ENCODE measurements at regions of chr5 and their contacts with region 1.

Region 1: DNA sequence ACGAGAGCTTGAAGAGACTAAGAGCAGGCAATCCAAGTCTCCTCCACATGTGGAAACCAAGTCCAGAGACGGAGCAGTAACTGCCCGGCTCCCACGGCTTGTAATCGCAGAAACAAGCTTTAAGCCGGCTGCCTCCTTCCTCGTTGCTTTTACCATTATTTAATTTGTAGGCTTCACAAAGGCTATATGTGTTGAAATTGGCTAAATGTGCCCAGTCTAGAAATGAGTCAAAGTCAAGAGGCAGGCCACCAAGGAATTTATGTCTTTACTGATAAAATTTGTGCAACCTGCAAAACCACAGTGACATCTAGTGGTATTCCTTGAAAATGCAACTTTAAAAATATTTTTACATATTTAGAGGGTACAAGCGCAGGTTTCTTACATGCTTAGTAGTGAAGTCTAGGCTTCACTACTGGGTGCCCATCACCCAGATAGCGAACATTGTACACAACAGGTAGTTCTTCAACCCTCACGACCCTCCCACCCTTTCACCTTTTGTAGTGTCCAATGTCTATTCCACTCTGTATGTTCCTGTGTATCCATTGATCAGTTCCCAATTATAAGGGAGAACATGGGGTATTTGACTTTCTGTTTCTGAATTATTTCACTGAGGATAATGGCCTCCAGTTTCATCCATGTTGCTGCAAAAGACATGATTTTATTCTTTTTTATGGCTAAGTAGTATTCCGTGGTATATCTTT is 33.5 kb upstream of the EBF1 start:
- DNase-seq: peak; percentile 79
- ATAC-seq: peak; percentile 78
- H3K4me3 ChIP-seq: peak overlapping the region; percentile 48
- H3K27ac ChIP-seq: peak overlapping the region; percentile 45
- H3K4me1 ChIP-seq: peaks cover 22% of the 10 kb centered on the region
- H3K27me3 ChIP-seq: peaks cover 2% of the 10 kb centered on the region; the same call in 1 of the 2 replicates
- CTCF ChIP-seq: peak; percentile 77

Region 2: GRCh38 chr5:157142317-157143126 is 1990.7 kb before region 1 on chr5 and contains the start of gene MED7:
- CTCF ChIA-PET with region 1: no interaction called
- POLR2A ChIA-PET with region 1: no interaction called
- intact Hi-C with region 1: loop called (anchors 10 kb)
- DNase-seq: peak; percentile 100
- ATAC-seq: peak; percentile 99
- H3K4me3 ChIP-seq: peak within 1 kb of the TSS; percentile 79
- H3K27ac ChIP-seq: peak within 1 kb of the TSS; percentile 16
- H3K4me1 ChIP-seq: peaks cover 10% of the 10 kb centered on the region; the same call in 1 of the 2 replicates
- H3K27me3 ChIP-seq: no peaks in the 10 kb centered on the region
- CTCF ChIP-seq: no peak
- total RNA-seq, gene MED7: 10.6 and 14.8 TPM in 2 replicates

Region 3: GRCh38 chr5:157820593-157821252 is 1312.5 kb before region 1 on chr5:
- CTCF ChIA-PET with region 1: no interaction called
- POLR2A ChIA-PET with region 1: no interaction called
- intact Hi-C with region 1: loop called (anchors 10 kb)
- DNase-seq: peak; percentile 78
- ATAC-seq: peak; percentile 80
- H3K4me3 ChIP-seq: no peak overlapping the region
- H3K27ac ChIP-seq: no peak overlapping the region
- H3K4me1 ChIP-seq: peaks cover 6% of the 10 kb centered on the region
- H3K27me3 ChIP-seq: no peaks in the 10 kb centered on the region
- CTCF ChIP-seq: peak; percentile 92

Region 4: DNA sequence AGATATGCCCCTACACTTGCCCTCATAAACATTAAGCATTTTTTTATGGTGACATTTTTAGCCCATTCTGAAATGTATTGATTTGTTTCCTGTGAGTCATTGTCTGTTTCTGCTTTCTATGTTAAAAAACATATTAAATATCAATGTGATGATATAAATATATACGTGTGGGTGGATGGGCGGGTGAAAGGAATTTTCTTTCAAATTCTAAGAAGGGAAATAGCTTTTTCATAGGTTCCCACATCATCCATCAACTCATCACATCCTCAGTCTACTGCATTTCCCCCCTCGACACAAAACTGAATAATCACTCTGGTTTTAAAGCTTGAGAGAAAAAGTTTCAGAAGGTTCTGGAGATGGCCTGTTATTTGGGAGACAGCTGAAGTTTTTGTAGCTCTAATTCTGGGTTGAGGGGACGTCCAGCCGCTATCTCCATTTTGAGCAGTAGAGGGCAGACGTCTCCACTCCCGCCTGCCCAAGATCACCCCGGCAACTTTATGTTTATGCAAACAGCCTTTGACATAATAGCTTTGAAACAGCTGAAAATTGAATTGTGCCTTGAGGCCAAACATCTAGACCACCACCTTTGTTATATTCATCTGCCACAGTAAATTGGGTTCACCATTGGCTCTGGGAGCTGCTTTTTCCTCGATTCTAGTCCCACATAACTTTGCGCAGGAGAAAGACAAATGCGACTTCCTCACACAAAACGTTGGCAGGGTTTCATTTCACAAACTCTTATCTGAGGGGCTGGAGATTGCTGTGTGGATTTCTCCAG is 1058.0 kb before region 1 on chr5:
- CTCF ChIA-PET with region 1: no interaction called
- POLR2A ChIA-PET with region 1: no interaction called
- intact Hi-C with region 1: loop called (anchors 5 kb)
- DNase-seq: peak; percentile 86
- ATAC-seq: peak; percentile 97
- H3K4me3 ChIP-seq: peak overlapping the region; percentile 55
- H3K27ac ChIP-seq: no peak overlapping the region
- H3K4me1 ChIP-seq: peaks cover 5% of the 10 kb centered on the region
- H3K27me3 ChIP-seq: peaks cover 47% of the 10 kb centered on the region
- CTCF ChIP-seq: peak; percentile 98

Region 5: DNA sequence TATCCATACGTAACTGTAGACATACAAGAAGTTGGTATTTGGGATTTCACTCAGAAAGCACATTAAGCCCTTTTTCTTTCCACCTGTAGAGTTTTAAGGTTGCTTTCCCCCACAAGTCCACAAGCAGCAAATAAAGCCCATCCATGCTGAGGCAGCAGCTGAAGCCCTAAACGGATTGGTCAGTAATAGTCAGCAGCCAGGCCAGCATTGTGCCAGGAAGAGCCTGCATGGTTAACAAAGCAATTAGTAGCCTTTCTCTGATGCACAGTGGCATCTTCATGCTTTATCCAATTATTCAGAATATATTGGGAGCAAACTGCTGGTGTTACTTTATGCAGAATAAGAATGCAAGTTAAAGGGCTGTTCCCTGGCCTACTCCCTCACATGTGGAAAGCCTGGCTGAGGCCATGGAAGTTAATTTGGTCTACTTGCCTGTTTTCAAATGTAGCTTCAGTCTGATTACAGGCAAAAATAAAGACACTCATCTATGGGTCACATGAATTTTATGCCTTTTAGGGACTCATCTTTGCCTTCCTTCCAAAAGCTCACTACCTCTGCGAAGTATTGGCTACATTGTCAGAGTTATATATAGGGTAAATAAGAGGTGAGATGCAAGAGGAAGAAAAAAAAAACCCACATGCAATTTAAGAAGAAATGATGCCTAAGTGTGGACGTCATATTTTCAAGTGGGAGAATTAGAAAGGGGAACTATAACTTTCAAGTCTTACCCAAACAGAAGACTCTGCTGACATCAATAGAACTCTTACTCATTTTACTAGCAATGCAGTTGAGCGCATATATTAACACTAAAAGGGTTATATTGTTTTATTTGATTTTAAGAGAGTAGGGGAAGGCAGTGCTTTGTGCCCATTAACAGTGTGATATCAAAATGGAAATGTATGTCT is 49.4 kb before region 1 on chr5:
- CTCF ChIA-PET with region 1: no interaction called
- POLR2A ChIA-PET with region 1: no interaction called
- intact Hi-C with region 1: no loop called
- DNase-seq: no peak
- ATAC-seq: no peak
- H3K4me3 ChIP-seq: no peak overlapping the region
- H3K27ac ChIP-seq: no peak overlapping the region
- H3K4me1 ChIP-seq: no peaks in the 10 kb centered on the region
- H3K27me3 ChIP-seq: peaks cover 5% of the 10 kb centered on the region; the same call in 1 of the 2 replicates
- CTCF ChIP-seq: no peak

Region 6: DNA sequence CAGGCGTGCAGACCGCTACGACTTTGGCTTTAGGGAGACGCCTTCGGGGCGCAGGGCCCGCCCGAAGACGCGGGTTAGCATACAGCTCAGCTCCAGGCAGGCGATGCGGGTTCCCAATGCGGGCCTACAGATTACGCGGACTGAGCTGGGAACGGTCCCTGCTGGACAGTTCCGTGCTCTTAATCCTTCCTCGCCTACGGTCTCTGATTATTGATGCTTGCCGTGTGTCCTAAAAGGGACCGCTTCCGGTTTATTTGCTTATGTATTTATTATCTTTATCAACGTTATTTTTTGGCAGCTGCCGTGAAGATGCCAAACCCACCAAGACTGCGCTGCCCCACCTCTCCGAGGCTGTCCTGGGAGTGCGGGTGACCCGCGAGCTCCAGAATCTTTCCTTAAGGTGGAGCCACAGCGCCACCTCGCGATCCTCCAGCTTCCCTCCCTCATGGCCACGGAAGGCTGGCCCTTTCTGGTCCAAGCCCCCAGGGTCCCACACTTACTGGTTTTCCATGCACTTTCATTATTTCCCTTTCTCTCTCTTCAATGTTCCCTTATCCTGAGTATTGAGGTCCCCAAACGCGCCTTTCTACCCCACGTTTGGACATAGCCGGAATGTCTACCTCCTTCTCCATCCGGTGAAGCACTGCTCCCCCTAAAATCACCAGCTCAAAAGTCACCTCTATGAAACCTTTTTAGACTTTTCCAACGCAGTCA is 26.5 kb before region 1 on chr5:
- CTCF ChIA-PET with region 1: interaction called, 3 read pairs
- POLR2A ChIA-PET with region 1: no interaction called
- intact Hi-C with region 1: loop called (anchors 2 kb)
- DNase-seq: peak; percentile 69
- ATAC-seq: peak; percentile 94
- H3K4me3 ChIP-seq: peak overlapping the region; percentile 44; the same call in 1 of the 2 replicates
- H3K27ac ChIP-seq: no peak overlapping the region
- H3K4me1 ChIP-seq: 0 out of 2 replicates have a peak, but pooled peaks cover 8% of the 10 kb centered on the region
- H3K27me3 ChIP-seq: peaks cover 44% of the 10 kb centered on the region
- CTCF ChIP-seq: peak; percentile 85

Region 7: GRCh38 chr5:159341914-159342313 is 208.7 kb after region 1 on chr5:
- CTCF ChIA-PET with region 1: no interaction called
- POLR2A ChIA-PET with region 1: no interaction called
- intact Hi-C with region 1: no loop called
- DNase-seq: peak; percentile 92
- ATAC-seq: peak; percentile 82
- H3K4me3 ChIP-seq: no peak overlapping the region
- H3K27ac ChIP-seq: peak overlapping the region; percentile 47; the same call in 1 of the 2 replicates
- H3K4me1 ChIP-seq: peaks cover 35% of the 10 kb centered on the region
- H3K27me3 ChIP-seq: no peaks in the 10 kb centered on the region
- CTCF ChIP-seq: no peak

Region 8: GRCh38 chr5:159605585-159605984 is 472.4 kb after region 1 on chr5:
- CTCF ChIA-PET with region 1: no interaction called
- POLR2A ChIA-PET with region 1: no interaction called
- intact Hi-C with region 1: no loop called
- DNase-seq: no peak
- ATAC-seq: no peak
- H3K4me3 ChIP-seq: no peak overlapping the region
- H3K27ac ChIP-seq: no peak overlapping the region
- H3K4me1 ChIP-seq: no peaks in the 10 kb centered on the region
- H3K27me3 ChIP-seq: no peaks in the 10 kb centered on the region
- CTCF ChIP-seq: no peak

Region 9: GRCh38 chr5:159749146-159749545 is 616.0 kb after region 1 on chr5:
- CTCF ChIA-PET with region 1: no interaction called
- POLR2A ChIA-PET with region 1: no interaction called
- intact Hi-C with region 1: no loop called
- DNase-seq: peak; percentile 81
- ATAC-seq: peak; percentile 64
- H3K4me3 ChIP-seq: no peak overlapping the region
- H3K27ac ChIP-seq: peak overlapping the region; percentile 66
- H3K4me1 ChIP-seq: peaks cover 41% of the 10 kb centered on the region
- H3K27me3 ChIP-seq: no peaks in the 10 kb centered on the region
- CTCF ChIP-seq: no peak

Measured in PC-3 (cell line).